CD14-positive monocyte (primary cell): ENCODE measurements at regions of chr14 and their contacts with region 1.

Region 1: GRCh38 chr14:61525293-61526011 is 169.9 kb upstream of the HIF1A start:
- DNase-seq: peak; percentile 93 to 98 (median 94)
- H3K4me3 ChIP-seq: no peak overlapping the region
- H3K4me3 Mint-ChIP-seq: peak overlapping the region in 1 of 2 donors; percentile 36
- H3K27ac ChIP-seq: peak overlapping the region; percentile 22 to 56
- H3K27ac Mint-ChIP-seq: peak overlapping the region in 6 of 7 donors; percentile 70 to 92 (median 88)
- H3K4me1 ChIP-seq: peaks cover 12 to 15% of the 10 kb centered on the region in 2 donors
- H3K4me1 Mint-ChIP-seq: peaks cover 40% of the 10 kb centered on the region
- H3K27me3 ChIP-seq: no peaks in the 10 kb centered on the region
- H3K27me3 Mint-ChIP-seq: no peaks in the 10 kb centered on the region
- CTCF ChIP-seq: no peak

Region 2: DNA sequence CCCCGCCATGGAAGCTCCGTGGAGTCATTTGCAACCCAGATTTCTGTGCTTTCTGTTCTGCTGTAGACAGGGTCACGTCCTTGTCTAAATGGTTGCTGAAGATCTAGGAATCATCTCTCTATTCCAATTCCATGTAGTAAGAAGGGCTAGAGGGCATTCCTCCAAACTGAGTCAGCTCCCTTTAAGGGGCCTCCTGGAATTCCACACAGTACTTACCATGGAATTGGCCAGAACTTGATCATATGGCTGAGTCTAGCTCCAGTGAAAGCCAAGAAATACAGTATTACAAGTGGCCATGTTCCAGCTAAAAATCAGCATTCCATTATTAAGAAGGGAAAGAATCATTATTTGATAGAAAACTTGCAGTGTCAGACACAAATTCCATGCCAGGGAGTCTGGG is 32.2 kb before region 1 on chr14:
- intact Hi-C with region 1: loop called (anchors 5 kb)
- DNase-seq: no peak
- H3K4me3 ChIP-seq: no peak overlapping the region
- H3K4me3 Mint-ChIP-seq: no peak overlapping the region
- H3K27ac ChIP-seq: no peak overlapping the region
- H3K27ac Mint-ChIP-seq: no peak overlapping the region
- H3K4me1 ChIP-seq: peaks cover 44 to 46% of the 10 kb centered on the region in 2 donors
- H3K4me1 Mint-ChIP-seq: peaks cover under 1% of the 10 kb centered on the region
- H3K27me3 ChIP-seq: no peaks in the 10 kb centered on the region
- H3K27me3 Mint-ChIP-seq: no peaks in the 10 kb centered on the region
- CTCF ChIP-seq: no peak

Region 3: DNA sequence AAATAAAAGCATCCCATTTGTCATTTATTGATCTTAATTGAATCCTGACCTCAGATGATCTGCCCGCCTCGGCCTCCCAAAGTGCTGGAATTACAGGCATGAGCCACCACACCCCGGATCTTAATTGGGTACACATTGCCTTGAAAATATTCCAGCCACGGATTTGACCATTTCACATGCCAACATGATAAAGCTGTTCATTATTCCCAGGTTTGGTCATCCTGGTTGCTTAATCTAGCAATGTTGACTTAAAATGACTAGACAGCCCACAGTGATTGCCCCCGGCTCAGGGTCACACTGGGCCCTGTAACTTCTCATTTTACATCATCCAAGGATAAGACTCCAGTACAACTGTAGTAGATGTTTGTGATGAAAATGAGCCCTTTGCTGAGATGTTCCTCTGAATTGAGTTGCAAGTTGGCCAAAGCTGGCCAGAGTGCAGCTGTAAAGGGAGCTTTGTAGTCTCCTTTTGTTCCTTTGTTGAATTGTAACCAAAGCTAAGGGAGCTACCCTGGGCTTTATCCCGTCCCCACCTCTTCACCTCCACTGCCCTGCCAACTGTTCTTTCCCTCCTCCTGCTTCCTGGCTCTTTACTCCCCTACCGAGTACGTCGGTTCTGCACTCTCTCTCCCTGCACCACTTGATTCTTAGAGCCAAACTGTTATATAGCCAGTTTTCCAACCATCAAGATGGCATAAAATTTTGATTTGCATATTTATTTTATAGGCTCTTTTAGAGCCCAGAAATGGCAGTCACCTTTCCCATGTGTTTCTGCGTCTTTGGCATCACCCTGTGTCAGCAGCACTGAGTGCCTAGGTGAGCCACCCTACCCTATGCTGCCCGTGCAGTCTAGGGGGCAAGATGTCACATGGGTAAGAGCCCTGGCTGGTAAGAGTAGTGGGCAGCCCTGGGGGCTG is 28.5 kb after region 1 on chr14:
- intact Hi-C with region 1: loop called in 1 of 2 experiments (anchors 2 kb)
- DNase-seq: peak; percentile 80 to 93 (median 90)
- H3K4me3 ChIP-seq: peak overlapping the region in 1 of 3 experiments; percentile 3
- H3K4me3 Mint-ChIP-seq: peak overlapping the region; percentile 55 to 59
- H3K27ac ChIP-seq: peak overlapping the region; percentile 92 to 94
- H3K27ac Mint-ChIP-seq: peak overlapping the region; percentile 98 to 100 (median 98)
- H3K4me1 ChIP-seq: peaks cover 35 to 47% of the 10 kb centered on the region in 2 donors
- H3K4me1 Mint-ChIP-seq: peaks cover 50% of the 10 kb centered on the region
- H3K27me3 ChIP-seq: no peaks in the 10 kb centered on the region
- H3K27me3 Mint-ChIP-seq: no peaks in the 10 kb centered on the region
- CTCF ChIP-seq: no peak

Region 4: GRCh38 chr14:61822458-61822857 is 297.0 kb after region 1 on chr14:
- intact Hi-C with region 1: no loop called
- DNase-seq: no peak
- H3K4me3 ChIP-seq: no peak overlapping the region
- H3K4me3 Mint-ChIP-seq: no peak overlapping the region
- H3K27ac ChIP-seq: no peak overlapping the region
- H3K27ac Mint-ChIP-seq: no peak overlapping the region
- H3K4me1 ChIP-seq: no peaks in the 10 kb centered on the region
- H3K4me1 Mint-ChIP-seq: no peaks in the 10 kb centered on the region
- H3K27me3 ChIP-seq: peaks cover 0 to 1% of the 10 kb centered on the region in 2 donors
- H3K27me3 Mint-ChIP-seq: peaks cover 7 to 11% (median 9%) of the 10 kb centered on the region in 3 donors
- CTCF ChIP-seq: no peak

Region 5: GRCh38 chr14:61934385-61934784 is 408.9 kb after region 1 on chr14:
- intact Hi-C with region 1: no loop called
- DNase-seq: no peak
- H3K4me3 ChIP-seq: no peak overlapping the region
- H3K4me3 Mint-ChIP-seq: no peak overlapping the region
- H3K27ac ChIP-seq: no peak overlapping the region
- H3K27ac Mint-ChIP-seq: no peak overlapping the region
- H3K4me1 ChIP-seq: no peaks in the 10 kb centered on the region
- H3K4me1 Mint-ChIP-seq: no peaks in the 10 kb centered on the region
- H3K27me3 ChIP-seq: peaks cover 0 to 2% of the 10 kb centered on the region in 2 donors
- H3K27me3 Mint-ChIP-seq: peaks cover 7 to 11% (median 9%) of the 10 kb centered on the region in 3 donors
- CTCF ChIP-seq: no peak